Naive thymus-derived CD4-positive, alpha-beta T cell (primary cell): ENCODE measurements at regions of chr5 and their contacts with region 1.

Region 1: DNA sequence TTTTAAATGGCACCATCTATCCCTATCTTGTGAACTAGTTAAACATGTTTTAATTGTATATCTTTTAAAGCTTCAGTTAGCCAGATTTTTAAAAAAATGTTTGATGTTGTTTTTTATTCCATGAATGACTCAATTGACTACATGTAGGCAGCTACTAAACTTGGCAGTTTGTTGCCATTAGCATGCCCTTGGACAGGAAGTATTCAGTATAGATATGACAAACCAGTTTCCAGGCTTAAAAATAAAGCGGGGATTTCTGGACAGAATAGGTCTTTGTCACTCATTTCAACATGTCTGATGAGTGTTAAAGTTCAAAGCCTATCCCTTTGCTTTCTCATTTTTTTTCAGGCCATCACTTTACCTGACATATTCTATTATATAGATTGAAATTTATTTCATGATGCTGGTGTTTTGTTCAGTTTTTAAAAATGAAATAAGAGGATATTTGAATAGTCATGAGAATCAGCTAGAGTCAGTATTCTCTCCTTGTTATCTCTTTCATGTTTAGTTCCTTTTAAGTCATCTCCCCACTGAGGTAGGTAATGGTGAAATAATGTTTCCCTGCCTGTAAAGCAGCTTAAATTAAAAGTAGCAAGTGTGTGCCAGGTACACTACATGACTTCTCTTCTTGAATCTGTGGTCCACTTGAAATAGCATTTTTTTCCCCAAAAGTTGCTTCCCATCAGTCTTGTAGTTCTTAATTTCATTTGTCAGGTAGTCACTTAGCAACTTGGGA is 11.9 kb downstream of the TNFAIP8 start:
- DNase-seq: peak in 2 of 9 donors; percentile 20 to 46
- ATAC-seq: peak; percentile 74
- H3K4me3 ChIP-seq: no peak overlapping the region
- H3K4me3 Mint-ChIP-seq: peak overlapping the region; percentile 52 to 78 (median 73)
- H3K27ac ChIP-seq: peak overlapping the region; percentile 55
- H3K27ac Mint-ChIP-seq: peak overlapping the region; percentile 24 to 96 (median 84)
- H3K4me1 ChIP-seq: peaks cover 54 to 76% of the 10 kb centered on the region in 2 donors
- H3K4me1 Mint-ChIP-seq: peaks cover 49 to 89% (median 84%) of the 10 kb centered on the region in 7 donors
- H3K27me3 ChIP-seq: no peaks in the 10 kb centered on the region
- H3K27me3 Mint-ChIP-seq: no peaks in the 10 kb centered on the region

Region 2: DNA sequence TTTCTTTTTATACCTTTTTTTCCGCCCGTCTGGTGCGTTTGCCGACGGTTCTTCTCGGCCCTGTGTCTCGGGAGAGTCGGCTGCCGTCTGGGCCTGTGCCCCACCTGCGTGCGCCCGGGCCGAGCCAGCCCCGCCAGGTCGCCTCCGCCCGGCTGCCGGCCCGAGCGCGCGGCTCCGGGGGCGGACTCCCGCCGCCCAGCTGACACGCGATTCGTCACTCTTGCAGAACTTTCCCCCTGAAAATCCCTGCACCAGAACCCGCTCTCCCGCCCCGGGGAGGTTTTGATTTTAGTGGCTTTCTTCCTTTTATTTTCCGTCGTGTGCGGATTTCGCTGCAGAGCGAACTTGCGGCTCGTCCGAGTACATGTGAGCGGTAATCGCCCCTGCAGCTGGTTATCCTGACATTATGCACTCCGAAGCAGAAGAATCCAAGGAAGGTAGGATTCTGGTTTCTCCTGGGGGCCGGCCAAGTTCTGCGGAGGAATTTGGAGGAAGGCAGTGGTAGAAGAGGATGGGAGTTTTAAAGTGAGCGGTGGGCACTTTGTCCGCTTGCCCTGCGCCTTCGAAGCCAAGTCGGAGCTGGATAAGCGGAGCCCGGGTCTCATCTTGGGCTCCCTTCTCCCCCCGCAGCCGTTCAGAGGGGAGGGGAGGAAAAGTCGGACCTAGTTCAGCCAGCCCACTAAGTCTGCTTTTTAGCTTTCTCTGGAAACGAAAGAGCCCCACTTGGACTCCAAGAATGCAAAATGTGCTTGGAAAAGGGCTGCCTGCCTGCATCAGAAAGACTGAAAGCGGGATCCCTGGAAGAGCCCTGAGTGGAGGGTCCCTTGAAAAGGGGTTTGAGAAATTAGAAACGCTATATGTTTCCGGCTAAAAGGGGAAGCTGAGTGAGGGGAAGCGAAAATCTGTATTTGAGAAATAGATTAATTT is 11.7 kb before region 1 on chr5 and contains the start of gene TNFAIP8:
- CTCF ChIA-PET with region 1: interaction called, 6 read pairs
- POLR2A ChIA-PET with region 1: interaction called, 11 read pairs
- intact Hi-C with region 1: loop called (anchors 1 kb)
- DNase-seq: peak in 2 of 9 donors; percentile 69 to 85
- ATAC-seq: peak; percentile 61
- H3K4me3 ChIP-seq: peak within 1 kb of the TSS; percentile 53
- H3K4me3 Mint-ChIP-seq: peak within 1 kb of the TSS; percentile 81 to 98 (median 90)
- H3K27ac ChIP-seq: peak within 1 kb of the TSS; percentile 55
- H3K27ac Mint-ChIP-seq: peak within 1 kb of the TSS; percentile 86 to 97 (median 91)
- H3K4me1 ChIP-seq: peaks cover 78 to 88% of the 10 kb centered on the region in 2 donors
- H3K4me1 Mint-ChIP-seq: peaks cover 66 to 100% (median 97%) of the 10 kb centered on the region in 7 donors
- H3K27me3 ChIP-seq: no peaks in the 10 kb centered on the region
- H3K27me3 Mint-ChIP-seq: no peaks in the 10 kb centered on the region
- total RNA-seq, gene TNFAIP8: 102 to 162 (median 130) TPM

Region 3: GRCh38 chr5:119379942-119380547 is 12.4 kb after region 1 on chr5:
- CTCF ChIA-PET with region 1: no interaction called
- POLR2A ChIA-PET with region 1: interaction called, 3 read pairs
- intact Hi-C with region 1: loop called in 1 of 2 experiments (anchors 1 kb)
- DNase-seq: no peak
- ATAC-seq: no peak
- H3K4me3 ChIP-seq: no peak overlapping the region
- H3K4me3 Mint-ChIP-seq: peak overlapping the region in 2 of 10 donors; percentile 36 to 39
- H3K27ac ChIP-seq: peak overlapping the region; percentile 17
- H3K27ac Mint-ChIP-seq: peak overlapping the region in 8 of 9 donors; percentile 55 to 87 (median 82)
- H3K4me1 ChIP-seq: peaks cover 31 to 77% of the 10 kb centered on the region in 2 donors
- H3K4me1 Mint-ChIP-seq: peaks cover 53 to 90% (median 77%) of the 10 kb centered on the region in 7 donors
- H3K27me3 ChIP-seq: no peaks in the 10 kb centered on the region
- H3K27me3 Mint-ChIP-seq: no peaks in the 10 kb centered on the region

Region 4: DNA sequence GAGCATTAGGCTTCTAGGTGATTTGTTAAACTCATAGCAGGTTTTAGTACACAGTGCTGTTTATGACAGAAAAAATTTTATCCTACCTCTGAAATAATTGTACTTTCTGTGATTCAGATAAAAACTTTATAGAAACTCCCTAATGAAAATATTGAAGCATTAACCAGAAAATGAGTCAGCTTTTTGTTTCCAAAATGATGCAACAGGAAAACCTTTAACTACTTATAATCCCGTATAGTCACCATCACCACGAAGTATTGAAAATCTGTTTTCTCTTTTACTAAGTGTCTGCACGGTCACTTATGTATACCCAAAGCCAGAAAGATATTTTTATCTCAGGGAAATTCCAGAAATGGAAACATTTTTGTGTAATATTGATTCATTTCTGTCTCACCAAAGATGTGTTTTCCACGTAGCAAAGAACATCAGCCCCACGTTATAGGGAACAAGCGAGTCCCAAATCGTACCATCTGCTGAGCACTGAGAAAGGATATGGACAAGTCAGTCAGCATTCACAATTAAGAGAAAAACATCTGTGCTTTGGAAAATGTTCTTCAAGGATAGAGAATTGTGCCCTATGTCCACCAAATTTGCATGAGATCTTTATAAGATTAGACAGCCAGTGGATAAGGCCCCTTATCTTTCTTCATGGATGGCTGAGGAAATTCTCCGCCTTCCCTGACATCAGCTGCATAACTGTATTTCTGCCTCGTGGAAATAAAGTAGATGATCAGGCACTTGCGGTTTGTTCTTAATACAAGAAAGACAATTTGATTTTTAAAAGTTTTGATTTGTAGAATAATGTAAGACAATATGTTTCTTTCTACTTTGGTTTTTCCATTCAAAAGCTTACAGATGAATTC is 30.1 kb after region 1 on chr5:
- CTCF ChIA-PET with region 1: no interaction called
- POLR2A ChIA-PET with region 1: interaction called, 4 read pairs
- intact Hi-C with region 1: loop called in 1 of 2 experiments (anchors 2 kb)
- DNase-seq: no peak
- ATAC-seq: peak; percentile 62
- H3K4me3 ChIP-seq: no peak overlapping the region
- H3K4me3 Mint-ChIP-seq: peak overlapping the region in 3 of 10 donors; percentile 1 to 37 (median 1)
- H3K27ac ChIP-seq: peak overlapping the region; percentile 25
- H3K27ac Mint-ChIP-seq: peak overlapping the region in 8 of 9 donors; percentile 8 to 82 (median 54)
- H3K4me1 ChIP-seq: no peaks in the 10 kb centered on the region
- H3K4me1 Mint-ChIP-seq: peaks cover 22 to 56% (median 53%) of the 10 kb centered on the region in 7 donors
- H3K27me3 ChIP-seq: no peaks in the 10 kb centered on the region
- H3K27me3 Mint-ChIP-seq: no peaks in the 10 kb centered on the region

Region 5: DNA sequence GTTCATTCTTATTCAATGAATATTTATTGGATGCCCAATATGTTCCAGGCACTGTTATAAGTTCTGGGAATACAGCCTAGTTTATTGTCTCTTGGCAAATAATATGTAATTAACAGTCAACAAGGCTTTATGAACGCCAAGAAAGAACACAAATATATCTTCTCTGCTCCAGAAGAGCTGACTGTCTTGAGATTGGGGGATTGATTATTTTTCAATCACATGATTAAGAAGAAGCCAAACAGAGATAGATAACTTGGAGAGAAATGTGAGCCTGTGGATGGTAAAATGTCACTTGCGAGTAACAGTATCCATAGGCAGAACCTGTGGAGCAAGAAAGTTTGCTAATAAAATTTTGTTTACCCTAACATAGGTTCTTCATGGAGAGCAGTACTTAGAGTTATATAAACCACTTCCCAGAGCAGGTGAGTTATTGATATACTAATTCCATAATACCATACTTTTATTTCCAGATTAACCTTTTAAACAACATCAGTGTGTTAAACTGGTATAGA is 134.1 kb after region 1 on chr5:
- CTCF ChIA-PET with region 1: no interaction called
- POLR2A ChIA-PET with region 1: no interaction called
- intact Hi-C with region 1: no loop called
- DNase-seq: no peak
- ATAC-seq: no peak
- H3K4me3 ChIP-seq: no peak overlapping the region
- H3K4me3 Mint-ChIP-seq: no peak overlapping the region
- H3K27ac ChIP-seq: no peak overlapping the region
- H3K27ac Mint-ChIP-seq: no peak overlapping the region
- H3K4me1 ChIP-seq: no peaks in the 10 kb centered on the region
- H3K4me1 Mint-ChIP-seq: peaks cover 0 to 4% (median 0%) of the 10 kb centered on the region in 7 donors
- H3K27me3 ChIP-seq: no peaks in the 10 kb centered on the region
- H3K27me3 Mint-ChIP-seq: no peaks in the 10 kb centered on the region

Region 6: GRCh38 chr5:119596046-119596445 is 228.4 kb after region 1 on chr5:
- CTCF ChIA-PET with region 1: no interaction called
- POLR2A ChIA-PET with region 1: no interaction called
- intact Hi-C with region 1: no loop called
- DNase-seq: no peak
- ATAC-seq: no peak
- H3K4me3 ChIP-seq: no peak overlapping the region
- H3K4me3 Mint-ChIP-seq: no peak overlapping the region
- H3K27ac ChIP-seq: no peak overlapping the region
- H3K27ac Mint-ChIP-seq: no peak overlapping the region
- H3K4me1 ChIP-seq: no peaks in the 10 kb centered on the region
- H3K4me1 Mint-ChIP-seq: no peaks in the 10 kb centered on the region
- H3K27me3 ChIP-seq: no peaks in the 10 kb centered on the region
- H3K27me3 Mint-ChIP-seq: no peaks in the 10 kb centered on the region